SK-N-SH (cell line): ENCODE measurements at regions of chr1 and their contacts with region 1.

Region 1: DNA sequence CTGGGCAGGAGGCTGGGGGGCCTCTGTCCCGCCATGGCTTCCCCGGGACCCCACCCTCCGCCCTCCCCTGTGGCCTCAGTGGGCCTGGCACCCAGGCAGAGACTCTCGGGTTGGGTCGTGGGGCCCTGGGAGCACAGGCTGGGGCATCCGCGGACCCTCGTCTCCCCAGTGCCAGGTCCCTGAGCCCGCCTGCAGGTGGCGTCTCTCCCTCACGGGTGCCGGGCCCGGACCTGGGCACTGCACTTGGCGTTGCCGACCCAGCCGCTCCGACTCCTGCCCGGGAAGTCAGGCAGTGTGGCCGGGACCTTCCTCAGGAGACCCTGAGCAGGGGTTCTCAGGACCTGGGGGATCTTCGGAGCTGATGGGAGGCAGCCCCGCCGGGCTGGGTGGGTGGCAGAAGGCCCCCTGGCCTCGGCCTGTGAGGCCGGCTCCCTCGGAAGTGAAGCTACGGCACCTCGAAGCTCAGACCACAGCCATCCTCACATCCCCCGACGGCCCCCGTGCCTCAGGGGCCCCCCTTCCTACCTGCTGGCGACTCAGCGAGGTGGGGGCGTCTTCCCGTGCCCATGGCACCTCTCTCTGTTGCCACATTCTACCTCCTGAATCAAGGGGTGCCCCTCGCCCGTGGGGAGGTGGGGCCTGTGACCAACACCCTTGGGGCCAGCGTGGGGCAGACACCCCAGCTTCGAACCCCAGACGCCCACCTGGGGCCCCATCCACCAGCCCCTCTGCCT is 6.4 kb upstream of the C1orf159 start:
- DNase-seq: peak; percentile 97
- H3K4me3 ChIP-seq: peak overlapping the region in 1 of 2 experiments; percentile 6; a peak in 1 of 4 replicates
- H3K27ac ChIP-seq: no peak overlapping the region
- H3K4me1 ChIP-seq: peaks cover 0 to 13% of the 10 kb centered on the region in 2 experiments; a peak in 1 of 4 replicates
- H3K27me3 ChIP-seq: 0 out of 2 replicates have a peak, but pooled peaks cover 6% of the 10 kb centered on the region
- CTCF ChIP-seq: peak; percentile 65
- EP300 ChIP-seq: no peak
- RAD21 ChIP-seq: peak; percentile 91

Region 2: DNA sequence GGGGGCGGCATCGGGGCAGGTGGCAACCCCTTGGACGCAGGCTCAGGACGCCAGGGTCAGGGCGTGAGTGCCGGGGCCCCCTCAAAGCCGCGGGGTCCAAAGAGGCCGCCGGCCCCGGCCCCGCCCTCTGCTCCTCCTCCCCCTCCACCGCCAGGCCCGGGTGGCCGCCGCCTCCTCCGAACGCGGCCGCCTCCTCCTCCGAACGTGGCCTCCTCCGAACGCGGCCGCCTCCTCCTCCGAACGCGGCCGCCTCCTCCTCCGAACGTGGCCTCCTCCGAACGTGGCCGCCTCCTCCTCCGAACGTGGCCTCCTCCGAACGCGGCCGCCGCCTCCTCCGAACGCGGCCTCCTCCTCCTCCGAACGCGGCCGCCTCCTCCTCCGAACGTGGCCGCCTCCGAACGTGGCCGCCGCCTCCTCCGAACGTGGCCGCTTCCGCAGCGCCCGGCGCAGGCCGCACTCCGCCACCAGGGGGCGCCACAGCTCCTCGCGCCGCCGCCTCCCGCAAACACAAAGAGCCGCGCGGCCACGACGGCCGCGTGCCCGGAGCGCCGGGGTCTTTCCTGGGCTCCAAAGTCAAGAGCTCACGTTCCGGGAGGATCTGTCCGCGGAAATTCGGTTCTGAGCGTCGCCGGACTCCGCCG is 217.8 kb before region 1 on chr1:
- CTCF ChIA-PET with region 1: no interaction called
- POLR2A ChIA-PET with region 1: no interaction called
- DNase-seq: peak; percentile 93
- H3K4me3 ChIP-seq: peak overlapping the region; percentile 42 to 44; a peak in 3 of 4 replicates
- H3K27ac ChIP-seq: no peak overlapping the region; a peak in 1 of 4 replicates
- H3K4me1 ChIP-seq: peaks cover 0 to 18% of the 10 kb centered on the region in 2 experiments; a peak in 1 of 4 replicates
- H3K27me3 ChIP-seq: no peaks in the 10 kb centered on the region
- CTCF ChIP-seq: peak; percentile 62
- EP300 ChIP-seq: no peak
- RAD21 ChIP-seq: peak; percentile 82

Region 3: DNA sequence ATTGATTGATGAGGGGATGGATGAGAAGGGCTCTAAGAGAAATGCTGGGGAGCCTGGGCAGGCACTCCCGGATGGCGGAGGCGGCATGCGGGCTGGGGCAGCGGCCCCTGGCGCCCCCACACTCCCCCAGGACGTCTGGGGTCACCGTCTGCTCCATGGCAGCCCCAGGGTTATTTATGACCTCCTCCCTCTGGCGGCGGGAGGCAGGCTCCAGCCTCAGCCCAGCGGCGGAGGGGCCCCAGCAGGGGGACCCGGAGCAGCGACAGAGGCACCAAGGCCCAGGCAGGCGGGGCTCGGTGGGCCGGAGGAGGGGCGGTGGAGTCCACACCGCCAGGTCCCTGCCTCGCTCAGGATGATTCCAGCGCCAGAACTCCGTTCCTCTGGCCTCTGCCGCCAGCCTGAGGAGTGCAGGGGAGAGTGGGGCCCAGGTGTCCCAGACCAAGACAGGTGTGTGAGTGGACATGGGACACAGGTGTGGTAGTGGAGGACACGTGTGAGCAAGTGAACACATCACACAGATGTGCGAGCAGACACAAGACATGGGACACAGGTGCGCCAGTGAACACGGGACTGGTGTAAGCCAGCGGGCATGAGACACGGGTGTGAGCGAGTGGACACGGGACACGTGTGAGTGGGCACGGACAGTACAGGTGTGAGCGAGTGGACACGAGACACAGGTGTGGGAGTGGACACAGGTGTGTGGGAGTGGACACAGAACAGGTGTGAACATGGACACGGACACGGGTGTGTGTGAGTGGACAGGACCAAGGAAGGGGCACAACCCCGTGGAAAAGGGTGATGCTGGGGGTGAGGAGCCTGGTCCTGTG is 201.0 kb before region 1 on chr1:
- CTCF ChIA-PET with region 1: no interaction called
- POLR2A ChIA-PET with region 1: no interaction called
- DNase-seq: peak; percentile 92
- H3K4me3 ChIP-seq: peak overlapping the region; percentile 9 to 24; a peak in 2 of 4 replicates
- H3K27ac ChIP-seq: peak overlapping the region in 1 of 2 experiments; percentile 55; a peak in 2 of 4 replicates
- H3K4me1 ChIP-seq: peaks cover 8 to 68% of the 10 kb centered on the region in 2 experiments; a peak in 2 of 4 replicates
- H3K27me3 ChIP-seq: no peaks in the 10 kb centered on the region
- CTCF ChIP-seq: peak; percentile 38
- EP300 ChIP-seq: peak; percentile 46 to 64; a peak in 3 of 4 replicates
- RAD21 ChIP-seq: peak; percentile 2; the same call in 1 of the 2 replicates

Region 4: GRCh38 chr1:1144122-1144842 is 22.0 kb after region 1 on chr1:
- CTCF ChIA-PET with region 1: interaction called, 11 read pairs
- POLR2A ChIA-PET with region 1: no interaction called
- DNase-seq: no peak
- H3K4me3 ChIP-seq: no peak overlapping the region
- H3K27ac ChIP-seq: no peak overlapping the region
- H3K4me1 ChIP-seq: no peaks in the 10 kb centered on the region; a peak in 1 of 4 replicates
- H3K27me3 ChIP-seq: no peaks in the 10 kb centered on the region
- CTCF ChIP-seq: no peak
- EP300 ChIP-seq: no peak
- RAD21 ChIP-seq: no peak

Region 5: DNA sequence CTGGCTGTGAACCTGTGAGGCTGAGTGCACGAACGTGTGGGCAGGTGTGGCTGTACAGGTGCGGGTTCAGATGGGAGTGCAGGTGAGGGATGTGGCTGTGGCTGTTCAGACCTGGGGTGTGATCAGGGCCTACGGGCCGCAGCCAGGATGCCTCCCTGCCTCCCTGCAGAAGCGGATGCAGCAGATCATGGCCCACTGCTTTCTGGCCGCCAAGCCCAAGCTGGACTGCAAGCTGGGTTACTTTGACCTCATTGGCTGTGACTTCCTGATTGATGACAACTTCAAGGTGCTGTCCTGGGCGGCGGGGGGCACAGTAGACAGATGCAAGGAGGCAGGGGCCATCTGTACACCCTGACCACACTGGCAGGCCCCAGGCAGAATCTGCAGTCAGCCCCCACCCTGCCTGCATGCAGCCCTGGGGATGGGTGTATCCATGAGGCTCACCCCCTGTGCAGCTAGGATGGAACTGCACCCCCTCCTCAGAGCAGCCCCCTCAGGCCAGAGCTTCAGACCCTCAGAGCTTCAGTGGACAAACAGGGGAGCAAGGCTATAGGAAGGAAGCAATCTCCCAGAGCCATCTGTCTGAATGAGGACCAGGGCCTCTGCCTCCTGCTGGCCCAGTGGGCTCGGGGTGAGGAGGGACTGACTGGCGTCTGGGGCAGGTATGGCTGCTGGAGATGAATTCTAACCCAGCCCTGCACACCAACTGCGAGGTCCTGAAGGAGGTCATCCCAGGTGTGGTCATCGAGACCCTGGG is 74.4 kb after region 1 on chr1:
- CTCF ChIA-PET with region 1: interaction called, 14 read pairs
- POLR2A ChIA-PET with region 1: no interaction called
- DNase-seq: peak; percentile 33
- H3K4me3 ChIP-seq: no peak overlapping the region
- H3K27ac ChIP-seq: no peak overlapping the region
- H3K4me1 ChIP-seq: no peaks in the 10 kb centered on the region
- H3K27me3 ChIP-seq: no peaks in the 10 kb centered on the region; the same call in 1 of the 2 replicates
- CTCF ChIP-seq: no peak
- EP300 ChIP-seq: no peak
- RAD21 ChIP-seq: no peak

Region 6: GRCh38 chr1:1231400-1232223 is 109.4 kb after region 1 on chr1 and contains the start of gene SDF4:
- CTCF ChIA-PET with region 1: interaction called, 43 read pairs
- POLR2A ChIA-PET with region 1: interaction called, 3 read pairs
- DNase-seq: peak; percentile 100
- H3K4me3 ChIP-seq: peak within 1 kb of the TSS; percentile 77 to 96
- H3K27ac ChIP-seq: peak within 1 kb of the TSS; percentile 68 to 83; a peak in 3 of 4 replicates
- H3K4me1 ChIP-seq: peaks cover 0 to 16% of the 10 kb centered on the region in 2 experiments; a peak in 1 of 4 replicates
- H3K27me3 ChIP-seq: no peaks in the 10 kb centered on the region
- CTCF ChIP-seq: no peak
- EP300 ChIP-seq: no peak
- RAD21 ChIP-seq: no peak
- polyA plus RNA-seq, gene SDF4: 182 and 265 TPM in 2 replicates

Region 7: DNA sequence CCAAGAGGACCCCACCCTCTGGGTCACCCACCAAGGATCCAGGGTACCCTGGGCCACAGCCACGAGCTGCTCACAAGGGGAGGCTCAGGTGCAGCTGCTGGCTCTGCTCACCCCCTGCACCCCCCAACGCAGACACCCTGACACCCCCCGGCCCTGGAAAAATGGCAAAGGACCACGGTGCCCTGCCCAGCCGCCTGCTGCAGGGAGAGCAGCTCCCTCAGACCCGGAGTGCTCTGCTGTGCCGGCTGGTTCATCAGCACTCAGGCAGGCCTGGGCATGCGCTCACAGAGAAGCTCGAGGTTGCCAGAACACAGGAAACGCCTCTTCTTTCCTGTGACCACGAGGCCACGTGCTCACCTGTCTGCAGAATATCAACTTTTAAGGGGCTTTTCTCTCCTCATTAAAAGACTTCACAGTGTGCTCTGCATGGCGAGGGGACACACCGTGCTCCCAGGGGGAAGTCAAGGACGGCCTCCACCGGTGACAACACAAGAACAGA is 128.6 kb after region 1 on chr1:
- CTCF ChIA-PET with region 1: interaction called, 61 read pairs
- POLR2A ChIA-PET with region 1: no interaction called
- DNase-seq: no peak
- H3K4me3 ChIP-seq: no peak overlapping the region
- H3K27ac ChIP-seq: peak overlapping the region in 1 of 2 experiments; percentile 6; a peak in 1 of 4 replicates
- H3K4me1 ChIP-seq: no peaks in the 10 kb centered on the region; a peak in 1 of 4 replicates
- H3K27me3 ChIP-seq: no peaks in the 10 kb centered on the region
- CTCF ChIP-seq: no peak
- EP300 ChIP-seq: no peak
- RAD21 ChIP-seq: no peak

Region 8: GRCh38 chr1:1291548-1292441 is 169.6 kb after region 1 on chr1:
- CTCF ChIA-PET with region 1: interaction called, 131 read pairs
- POLR2A ChIA-PET with region 1: interaction called, 3 read pairs
- DNase-seq: peak; percentile 84
- H3K4me3 ChIP-seq: no peak overlapping the region
- H3K27ac ChIP-seq: no peak overlapping the region
- H3K4me1 ChIP-seq: peaks cover 0 to 6% of the 10 kb centered on the region in 2 experiments; a peak in 1 of 4 replicates
- H3K27me3 ChIP-seq: no peaks in the 10 kb centered on the region
- CTCF ChIP-seq: peak; percentile 57
- EP300 ChIP-seq: no peak
- RAD21 ChIP-seq: peak; percentile 70